Aorta (tissue), 5 donors: ENCODE measurements at regions of chr11 and their contacts with region 1.

Region 1: GRCh38 chr11:17810746-17811145 is 76.2 kb downstream of the KCNC1 start:
- DNase-seq: no peak
- ATAC-seq: no peak
- H3K4me3 ChIP-seq: no peak overlapping the region
- H3K27ac ChIP-seq: no peak overlapping the region
- H3K4me1 ChIP-seq: peaks cover 0 to 5% of the 10 kb centered on the region in 2 donors
- H3K27me3 ChIP-seq: no peaks in the 10 kb centered on the region

Region 2: GRCh38 chr11:17457396-17458173 is 353.2 kb before region 1 on chr11:
- intact Hi-C with region 1: no loop called
- DNase-seq: no peak
- ATAC-seq: no peak
- H3K4me3 ChIP-seq: no peak overlapping the region
- H3K27ac ChIP-seq: no peak overlapping the region
- H3K4me1 ChIP-seq: no peaks in the 10 kb centered on the region
- H3K27me3 ChIP-seq: no peaks in the 10 kb centered on the region

Region 3: GRCh38 chr11:17954395-17955252 is 143.9 kb after region 1 on chr11:
- intact Hi-C with region 1: loop called in 1 of 2 experiments (anchors 5 kb)
- DNase-seq: no peak
- ATAC-seq: peak; percentile 53
- H3K4me3 ChIP-seq: no peak overlapping the region
- H3K27ac ChIP-seq: peak overlapping the region; percentile 43 to 79
- H3K4me1 ChIP-seq: peaks cover 0 to 4% of the 10 kb centered on the region in 2 donors
- H3K27me3 ChIP-seq: no peaks in the 10 kb centered on the region